Dendritic cell treated with granulocyte-macrophage colony-stimulating factor and Interleukin-4, amounts not matched to agents 40 ng/mL and 50 ng/mL, for 4 days (primary cell): ENCODE measurements at regions of chr3 and their contacts with region 1.

Region 1: GRCh38 chr3:194682694-194683310 is 2.9 kb upstream of the FAM43A start:
- H3K4me3 Mint-ChIP-seq: peak overlapping the region; percentile 18
- H3K27ac Mint-ChIP-seq: peak overlapping the region; percentile 4
- H3K4me1 Mint-ChIP-seq: peaks cover 38% of the 10 kb centered on the region
- H3K27me3 Mint-ChIP-seq: peaks cover 14% of the 10 kb centered on the region

Region 2: GRCh38 chr3:194671900-194672808 is 10.6 kb before region 1 on chr3 and contains the start of gene LSG1:
- intact Hi-C with region 1: no loop called
- H3K4me3 Mint-ChIP-seq: peak within 1 kb of the TSS; percentile 97
- H3K27ac Mint-ChIP-seq: peak within 1 kb of the TSS; percentile 95
- H3K4me1 Mint-ChIP-seq: peaks cover 24% of the 10 kb centered on the region
- H3K27me3 Mint-ChIP-seq: peaks cover 6% of the 10 kb centered on the region

Region 3: GRCh38 chr3:194782698-194783404 is 100.0 kb after region 1 on chr3:
- intact Hi-C with region 1: loop called (anchors 10 kb)
- H3K4me3 Mint-ChIP-seq: peak overlapping the region; percentile 6
- H3K27ac Mint-ChIP-seq: peak overlapping the region; percentile 89
- H3K4me1 Mint-ChIP-seq: peaks cover 64% of the 10 kb centered on the region
- H3K27me3 Mint-ChIP-seq: peaks cover 1% of the 10 kb centered on the region

Region 4: DNA sequence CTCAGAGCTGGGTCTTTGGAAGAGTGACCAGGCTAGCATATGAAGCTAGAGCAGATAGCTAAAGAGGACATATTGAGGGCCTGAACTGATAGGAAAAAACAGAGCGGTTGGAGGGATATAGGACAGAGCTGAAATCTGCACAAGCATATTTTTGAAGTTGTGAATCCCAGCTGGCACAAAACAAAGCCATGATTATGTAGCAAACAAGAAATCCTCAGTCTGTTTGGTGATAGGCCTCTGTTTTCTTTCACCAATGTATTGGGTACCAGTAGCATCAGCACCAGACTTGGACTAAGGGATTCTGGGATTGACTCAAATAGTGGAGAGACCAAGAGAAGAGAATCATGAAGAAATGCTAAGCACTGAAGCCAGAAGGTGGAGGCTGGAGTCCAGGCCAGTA is 153.9 kb after region 1 on chr3:
- intact Hi-C with region 1: no loop called
- H3K4me3 Mint-ChIP-seq: no peak overlapping the region
- H3K27ac Mint-ChIP-seq: no peak overlapping the region
- H3K4me1 Mint-ChIP-seq: peaks cover 3% of the 10 kb centered on the region
- H3K27me3 Mint-ChIP-seq: peaks cover 4% of the 10 kb centered on the region

Region 5: GRCh38 chr3:194861375-194861774 is 178.6 kb after region 1 on chr3:
- intact Hi-C with region 1: loop called (anchors 5 kb)
- H3K4me3 Mint-ChIP-seq: no peak overlapping the region
- H3K27ac Mint-ChIP-seq: peak overlapping the region; percentile 76
- H3K4me1 Mint-ChIP-seq: peaks cover 51% of the 10 kb centered on the region
- H3K27me3 Mint-ChIP-seq: peaks cover 11% of the 10 kb centered on the region

Region 6: GRCh38 chr3:194952841-194953241 is 270.0 kb after region 1 on chr3:
- intact Hi-C with region 1: loop called (anchors 1 kb)
- H3K4me3 Mint-ChIP-seq: no peak overlapping the region
- H3K27ac Mint-ChIP-seq: no peak overlapping the region
- H3K4me1 Mint-ChIP-seq: peaks cover 28% of the 10 kb centered on the region
- H3K27me3 Mint-ChIP-seq: peaks cover 9% of the 10 kb centered on the region

Region 7: DNA sequence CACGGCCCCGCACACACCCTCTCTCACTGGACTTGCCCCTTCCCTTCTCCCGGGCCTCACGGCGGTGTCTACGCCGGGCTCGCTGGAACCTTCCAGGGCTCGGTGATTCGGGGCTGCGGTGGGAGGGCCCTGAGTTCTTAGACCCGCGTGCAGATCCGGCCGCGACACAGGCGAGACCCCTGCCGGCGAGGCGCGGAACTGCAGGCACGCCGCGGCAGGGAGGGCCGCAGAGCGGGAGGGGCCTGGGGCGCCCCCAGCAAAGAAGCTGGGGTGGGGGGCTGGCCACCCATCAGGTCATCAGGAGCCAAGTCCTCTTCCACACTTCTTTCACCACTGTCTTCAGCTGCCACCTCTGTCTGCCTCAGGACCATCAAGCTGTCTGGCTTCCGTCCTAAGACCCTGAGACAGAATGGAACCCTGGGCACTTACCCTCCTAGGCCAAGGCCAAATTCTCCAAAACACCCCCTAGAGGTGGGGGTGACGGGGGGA is 423.7 kb after region 1 on chr3:
- intact Hi-C with region 1: loop called (anchors 5 kb)
- H3K4me3 Mint-ChIP-seq: peak overlapping the region; percentile 38
- H3K27ac Mint-ChIP-seq: peak overlapping the region; percentile 28
- H3K4me1 Mint-ChIP-seq: peaks cover 48% of the 10 kb centered on the region
- H3K27me3 Mint-ChIP-seq: peaks cover 4% of the 10 kb centered on the region